Naive thymus-derived CD4-positive, alpha-beta T cell (primary cell): ENCODE measurements at regions of chr22 and their contacts with region 1.

Region 1: DNA sequence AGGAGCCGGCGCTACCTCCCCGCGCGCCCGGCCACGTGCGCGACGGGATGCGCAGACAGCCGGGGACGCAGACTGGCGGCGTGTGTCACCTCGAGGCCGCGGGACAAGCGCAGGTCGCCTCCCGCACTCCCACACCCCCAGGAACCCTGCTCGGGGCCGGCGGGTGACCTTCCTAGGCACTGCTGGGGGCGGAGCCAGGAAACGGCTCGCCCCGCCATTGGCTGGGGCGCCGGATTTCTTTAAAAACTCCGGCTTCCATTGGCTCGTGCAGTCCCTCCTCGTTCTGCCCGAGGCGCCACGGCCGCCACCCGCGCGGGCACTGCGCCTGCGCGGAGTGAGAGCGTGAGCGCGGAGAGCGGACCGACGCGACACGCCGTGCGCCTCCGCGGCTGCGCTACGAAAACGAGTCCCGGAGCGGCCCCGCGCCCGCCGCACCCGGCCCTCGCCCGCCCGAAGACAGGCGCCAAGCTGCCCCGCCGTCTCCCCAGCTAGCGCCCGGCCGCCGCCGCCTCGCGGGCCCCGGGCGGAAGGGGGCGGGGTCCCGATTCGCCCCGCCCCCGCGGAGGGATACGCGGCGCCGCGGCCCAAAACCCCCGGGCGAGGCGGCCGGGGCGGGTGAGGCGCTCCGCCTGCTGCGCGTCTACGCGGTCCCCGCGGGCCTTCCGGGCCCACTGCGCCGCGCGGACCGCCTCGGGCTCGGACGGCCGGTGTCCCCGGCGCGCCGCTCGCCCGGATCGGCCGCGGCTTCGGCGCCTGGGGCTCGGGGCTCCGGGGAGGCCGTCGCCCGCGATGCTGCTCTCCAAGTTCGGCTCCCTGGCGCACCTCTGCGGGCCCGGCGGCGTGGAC is at the start of gene PIM3:
- DNase-seq: peak; percentile 90 to 95 (median 94)
- ATAC-seq: peak; percentile 80
- H3K4me3 ChIP-seq: peak within 1 kb of the TSS; percentile 86
- H3K4me3 Mint-ChIP-seq: peak within 1 kb of the TSS; percentile 82 to 95 (median 90)
- H3K27ac ChIP-seq: peak within 1 kb of the TSS; percentile 90
- H3K27ac Mint-ChIP-seq: peak within 1 kb of the TSS; percentile 76 to 96 (median 89)
- H3K4me1 ChIP-seq: peaks cover 20 to 26% of the 10 kb centered on the region in 2 donors
- H3K4me1 Mint-ChIP-seq: peaks cover 7 to 30% (median 15%) of the 10 kb centered on the region in 7 donors
- H3K27me3 ChIP-seq: no peaks in the 10 kb centered on the region
- H3K27me3 Mint-ChIP-seq: no peaks in the 10 kb centered on the region
- total RNA-seq, gene PIM3: 44.4 to 164 (median 78.3) TPM

Region 2: DNA sequence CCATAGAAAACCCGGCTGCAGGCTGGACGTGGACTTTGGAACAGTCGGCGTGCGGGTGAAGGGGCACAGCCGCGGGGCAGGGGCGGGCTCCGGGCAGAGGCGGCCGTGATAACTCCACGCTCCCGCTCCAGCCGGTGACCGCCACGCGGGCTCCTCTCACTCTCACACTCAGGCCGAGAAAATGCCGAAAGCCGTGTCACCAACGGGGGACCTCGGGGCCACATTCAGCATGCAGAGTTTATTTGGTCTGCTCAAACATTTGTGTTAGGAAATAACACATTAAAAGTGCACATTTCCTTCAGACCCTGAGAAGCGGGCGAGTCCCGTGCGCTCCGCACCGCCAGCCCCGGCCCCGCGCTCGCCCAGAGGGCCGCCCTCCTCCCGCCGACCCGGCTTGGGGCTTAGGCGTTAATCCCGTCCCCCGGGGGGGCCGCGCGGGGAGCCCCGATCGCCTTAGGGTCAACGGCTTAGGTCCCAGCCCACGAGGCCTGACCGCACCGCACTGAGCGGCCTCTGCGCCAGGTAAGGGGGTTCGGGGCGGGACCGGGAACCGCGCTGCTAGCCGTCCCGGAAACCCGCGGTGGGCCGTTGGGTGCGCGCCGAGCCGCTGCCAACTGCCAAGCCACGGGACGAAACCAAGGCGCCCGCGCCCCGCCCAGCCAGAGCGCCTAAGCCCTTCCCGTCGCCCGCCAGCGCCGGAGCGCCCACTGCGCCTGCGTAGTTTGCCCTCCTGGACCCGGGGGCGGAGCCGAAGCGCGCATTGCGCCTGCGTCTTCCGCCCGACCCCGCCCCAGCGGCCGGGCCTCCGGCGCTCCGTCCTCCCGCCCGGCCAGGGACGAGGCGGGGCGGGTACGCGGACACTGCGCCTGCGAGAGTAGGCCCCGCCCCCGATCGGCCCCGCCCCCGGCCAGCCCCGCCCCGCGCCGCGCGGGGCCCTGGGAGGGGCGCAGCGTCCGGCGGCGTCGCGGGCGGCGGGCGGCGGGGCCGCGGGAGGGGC is 107.2 kb before region 1 on chr22 and contains the start of gene ZBED4:
- CTCF ChIA-PET with region 1: no interaction called
- POLR2A ChIA-PET with region 1: no interaction called
- intact Hi-C with region 1: loop called in 1 of 2 experiments (anchors 5 kb)
- DNase-seq: peak; percentile 90 to 100 (median 98)
- ATAC-seq: peak; percentile 95
- H3K4me3 ChIP-seq: peak within 1 kb of the TSS; percentile 68
- H3K4me3 Mint-ChIP-seq: peak within 1 kb of the TSS; percentile 90 to 99 (median 96)
- H3K27ac ChIP-seq: peak within 1 kb of the TSS; percentile 90
- H3K27ac Mint-ChIP-seq: peak within 1 kb of the TSS; percentile 86 to 97 (median 93)
- H3K4me1 ChIP-seq: peaks cover 14 to 31% of the 10 kb centered on the region in 2 donors
- H3K4me1 Mint-ChIP-seq: peaks cover 30 to 62% (median 45%) of the 10 kb centered on the region in 7 donors
- H3K27me3 ChIP-seq: no peaks in the 10 kb centered on the region
- H3K27me3 Mint-ChIP-seq: peaks cover 0 to 17% (median 0%) of the 10 kb centered on the region in 5 donors
- total RNA-seq, gene ZBED4: 13.6 to 20.1 (median 17.1) TPM

Region 3: GRCh38 chr22:49930739-49931412 is 29.5 kb before region 1 on chr22:
- CTCF ChIA-PET with region 1: interaction called, 3 read pairs
- POLR2A ChIA-PET with region 1: interaction called, 48 read pairs
- intact Hi-C with region 1: loop called (anchors 1 kb)
- DNase-seq: peak in 7 of 9 donors; percentile 37 to 55 (median 44)
- ATAC-seq: peak; percentile 40
- H3K4me3 ChIP-seq: no peak overlapping the region
- H3K4me3 Mint-ChIP-seq: peak overlapping the region; percentile 34 to 83 (median 60)
- H3K27ac ChIP-seq: peak overlapping the region; percentile 37
- H3K27ac Mint-ChIP-seq: peak overlapping the region; percentile 79 to 92 (median 87)
- H3K4me1 ChIP-seq: peaks cover 10 to 28% of the 10 kb centered on the region in 2 donors
- H3K4me1 Mint-ChIP-seq: peaks cover 18 to 47% (median 39%) of the 10 kb centered on the region in 7 donors
- H3K27me3 ChIP-seq: no peaks in the 10 kb centered on the region
- H3K27me3 Mint-ChIP-seq: no peaks in the 10 kb centered on the region

Region 4: DNA sequence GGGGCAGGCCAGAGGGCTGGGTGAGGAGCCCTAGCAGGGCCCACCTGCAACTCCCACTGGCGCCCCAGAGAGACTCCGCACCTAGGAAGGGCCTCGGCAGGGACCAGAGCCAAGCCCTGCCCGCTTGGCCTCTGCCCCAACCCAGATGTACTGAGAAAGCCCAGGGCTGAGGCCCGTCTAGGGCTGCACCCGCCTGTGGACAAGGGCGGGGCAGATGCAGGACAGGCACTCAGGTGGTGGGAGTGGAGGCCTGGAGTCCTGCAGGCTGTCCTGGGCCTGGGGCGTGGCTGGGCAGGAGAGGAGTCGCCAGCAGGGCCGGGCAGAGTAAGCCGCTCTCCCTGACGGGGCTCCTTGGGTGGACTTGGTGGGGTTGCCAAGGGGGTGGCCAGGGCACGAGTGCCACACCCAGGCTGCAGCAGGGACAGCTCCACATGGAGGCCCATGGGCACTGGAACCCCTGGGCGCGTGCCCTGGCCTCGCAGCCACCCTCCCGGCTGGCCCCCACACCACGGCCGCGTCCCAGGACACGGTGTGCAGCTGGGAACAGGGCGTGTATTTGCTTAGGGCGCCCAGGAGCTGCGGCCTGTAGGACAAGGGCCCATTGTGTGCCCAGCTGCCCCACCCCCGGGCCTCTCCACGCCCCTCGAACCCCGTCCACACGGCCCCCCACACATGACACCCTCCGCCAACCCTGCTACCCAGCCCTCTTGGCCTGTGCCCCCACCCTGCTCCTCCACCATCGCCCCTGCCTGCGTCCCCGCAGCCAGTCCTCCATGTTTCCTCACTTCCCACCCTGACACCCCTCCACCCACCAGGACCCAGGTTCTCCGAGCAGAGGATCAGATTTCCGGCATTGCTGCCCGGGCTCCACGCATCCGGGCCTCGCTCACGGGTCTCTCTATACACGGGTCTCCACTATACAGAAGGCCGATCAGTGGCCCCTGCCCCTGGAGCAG is 11.1 kb before region 1 on chr22:
- CTCF ChIA-PET with region 1: interaction called, 4 read pairs
- POLR2A ChIA-PET with region 1: interaction called, 14 read pairs
- intact Hi-C with region 1: loop called (anchors 1 kb)
- DNase-seq: no peak
- ATAC-seq: no peak
- H3K4me3 ChIP-seq: no peak overlapping the region
- H3K4me3 Mint-ChIP-seq: no peak overlapping the region
- H3K27ac ChIP-seq: no peak overlapping the region
- H3K27ac Mint-ChIP-seq: peak overlapping the region in 1 of 9 donors; percentile 55
- H3K4me1 ChIP-seq: peaks cover 9 to 18% of the 10 kb centered on the region in 2 donors
- H3K4me1 Mint-ChIP-seq: peaks cover 5 to 18% (median 9%) of the 10 kb centered on the region in 7 donors
- H3K27me3 ChIP-seq: no peaks in the 10 kb centered on the region
- H3K27me3 Mint-ChIP-seq: no peaks in the 10 kb centered on the region

Region 5: GRCh38 chr22:50530877-50531545 is 570.6 kb after region 1 on chr22:
- CTCF ChIA-PET with region 1: no interaction called
- POLR2A ChIA-PET with region 1: no interaction called
- intact Hi-C with region 1: loop called in 1 of 2 experiments (anchors 10 kb)
- DNase-seq: peak in 7 of 9 donors; percentile 46 to 85 (median 57)
- ATAC-seq: peak; percentile 60
- H3K4me3 ChIP-seq: peak overlapping the region; percentile 86
- H3K4me3 Mint-ChIP-seq: peak overlapping the region; percentile 80 to 96 (median 87)
- H3K27ac ChIP-seq: peak overlapping the region; percentile 84
- H3K27ac Mint-ChIP-seq: peak overlapping the region; percentile 67 to 100 (median 90)
- H3K4me1 ChIP-seq: peaks cover 5 to 14% of the 10 kb centered on the region in 2 donors
- H3K4me1 Mint-ChIP-seq: peaks cover 0 to 49% (median 30%) of the 10 kb centered on the region in 7 donors
- H3K27me3 ChIP-seq: no peaks in the 10 kb centered on the region
- H3K27me3 Mint-ChIP-seq: peaks cover 0 to 5% (median 0%) of the 10 kb centered on the region in 5 donors